ENCODE measurements at regions of chr6 and their contacts with region 1.

Region 1: GRCh38 chr6:44851176-44851575 is 463.7 kb downstream of the CDC5L start:
- DNase-seq: peak; percentile 17
- ATAC-seq: no peak
- H3K4me3 ChIP-seq: no peak overlapping the region
- H3K27ac ChIP-seq: no peak overlapping the region
- H3K4me1 ChIP-seq: no peaks in the 10 kb centered on the region
- H3K27me3 ChIP-seq: no peaks in the 10 kb centered on the region
- CTCF ChIP-seq: no peak
- POLR2A ChIP-seq: no peak
- RAD21 ChIP-seq: no peak

Region 2: DNA sequence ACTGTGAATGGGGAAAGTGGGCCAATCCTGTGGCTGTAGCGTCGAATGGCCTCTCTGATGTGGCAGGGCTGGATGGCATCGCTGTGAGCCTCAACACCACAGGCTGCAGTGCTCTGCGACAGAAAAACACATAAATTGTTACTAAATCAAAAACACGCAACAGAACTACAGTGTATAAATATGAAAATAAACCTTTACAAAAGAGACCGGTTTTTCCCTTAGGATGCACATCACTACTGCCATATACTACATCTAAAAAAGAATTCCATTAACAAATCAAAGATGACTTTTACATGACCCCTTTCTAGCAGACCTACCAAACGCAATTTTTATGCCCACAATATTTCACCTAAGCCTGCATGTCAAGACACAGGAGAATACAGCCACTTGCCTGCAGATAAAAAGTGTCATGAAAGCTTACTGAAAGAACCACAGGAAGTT is 81.5 kb after region 1 on chr6:
- CTCF ChIA-PET with region 1: no interaction called
- POLR2A ChIA-PET with region 1: no interaction called
- dilution Hi-C with region 1: no loop called
- in situ Hi-C with region 1: no loop called
- intact Hi-C with region 1: loop called (anchors 5 kb)
- DNase-seq: no peak
- ATAC-seq: no peak
- H3K4me3 ChIP-seq: no peak overlapping the region
- H3K27ac ChIP-seq: no peak overlapping the region
- H3K4me1 ChIP-seq: no peaks in the 10 kb centered on the region
- H3K27me3 ChIP-seq: no peaks in the 10 kb centered on the region
- CTCF ChIP-seq: no peak
- POLR2A ChIP-seq: no peak
- RAD21 ChIP-seq: no peak